ENCODE measurements at regions of chr3 and their contacts with region 1.

Region 1: DNA sequence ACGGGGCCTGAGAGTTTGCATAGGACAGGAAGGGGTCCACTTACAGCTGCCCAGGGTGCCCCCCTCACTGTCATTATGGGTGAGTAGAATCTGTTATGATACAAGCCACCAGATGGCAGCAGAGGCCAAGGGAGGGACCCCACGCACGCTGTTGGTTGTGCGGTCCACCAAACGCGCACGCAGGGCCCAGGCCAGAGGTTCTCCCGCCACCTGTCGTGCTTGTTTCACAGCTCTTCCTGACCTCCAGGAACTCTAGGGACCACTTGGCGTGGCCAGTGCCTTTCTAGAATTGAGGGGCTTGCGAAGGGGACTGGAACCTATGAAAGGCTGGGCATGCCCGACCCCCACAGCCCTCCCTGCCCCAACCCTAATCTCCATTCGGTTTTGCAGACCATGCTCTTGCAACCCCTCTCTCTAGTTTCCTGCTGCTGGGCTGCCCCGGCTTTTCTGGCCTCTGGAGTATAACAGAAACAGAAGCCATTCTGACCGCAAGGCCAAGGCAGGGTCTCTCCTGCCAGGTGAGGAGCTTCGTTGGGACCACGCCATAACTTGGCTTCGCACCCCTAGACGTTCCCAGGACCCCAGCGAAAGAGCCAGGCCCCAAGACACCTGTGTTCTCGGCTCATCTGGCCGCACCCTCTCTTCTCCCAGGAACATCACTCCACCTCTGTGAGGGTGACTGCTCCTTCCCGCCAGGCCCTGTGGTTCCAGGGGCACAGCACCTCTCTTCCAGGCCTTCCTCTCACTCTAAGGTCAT is 46.0 kb downstream of the ALDH1L1 start:
- DNase-seq: peak; percentile 69
- CTCF ChIP-seq: peak; percentile 55

Region 2: DNA sequence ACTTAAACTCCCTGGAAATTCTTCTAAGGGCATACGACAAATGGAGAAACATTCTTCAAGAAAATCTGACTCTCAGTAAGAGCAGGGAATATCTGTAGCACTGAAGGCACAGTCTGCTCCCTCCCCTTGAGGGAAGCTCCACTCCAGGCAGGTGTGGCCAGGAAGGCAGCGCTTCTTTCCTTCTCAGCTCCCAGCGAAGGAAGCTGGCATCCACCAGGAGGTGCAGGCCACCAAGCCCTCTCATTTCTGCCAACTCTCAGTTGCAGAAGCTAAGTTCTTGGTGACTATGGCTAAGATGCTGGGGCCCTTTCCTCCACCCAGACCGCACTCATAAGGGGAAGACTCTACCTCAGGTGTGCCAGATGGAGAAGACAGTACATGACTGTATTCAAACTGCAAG is 12.8 kb before region 1 on chr3:
- CTCF ChIA-PET with region 1: interaction called, 13 read pairs
- POLR2A ChIA-PET with region 1: no interaction called
- DNase-seq: no peak
- CTCF ChIP-seq: no peak

Region 3: GRCh38 chr3:126389112-126389793 is 254.9 kb after region 1 on chr3:
- CTCF ChIA-PET with region 1: interaction called, 23 read pairs
- POLR2A ChIA-PET with region 1: no interaction called
- DNase-seq: peak; percentile 83
- CTCF ChIP-seq: peak; percentile 91